Caco-2 (cell line): ENCODE measurements at regions of chr9 and their contacts with region 1.

Region 1: GRCh38 chr9:6305954-6306563 is 22.1 kb upstream of the TPD52L3 start:
- DNase-seq: peak in 1 of 2 experiments; percentile 10
- H3K4me3 ChIP-seq: no peak overlapping the region
- H3K4me3 Mint-ChIP-seq: no peak overlapping the region
- H3K27ac Mint-ChIP-seq: no peak overlapping the region
- H3K4me1 ChIP-seq: no peaks in the 10 kb centered on the region
- H3K4me1 Mint-ChIP-seq: no peaks in the 10 kb centered on the region
- H3K27me3 ChIP-seq: no peaks in the 10 kb centered on the region
- H3K27me3 Mint-ChIP-seq: peaks cover 3% of the 10 kb centered on the region
- CTCF ChIP-seq: peak; percentile 36 to 43

Region 2: GRCh38 chr9:5886114-5886939 is 419.7 kb before region 1 on chr9:
- CTCF ChIA-PET with region 1: interaction called, 4 read pairs
- POLR2A ChIA-PET with region 1: no interaction called
- intact Hi-C with region 1: loop called (anchors 10 kb)
- DNase-seq: peak; percentile 76 to 83
- H3K4me3 ChIP-seq: no peak overlapping the region
- H3K4me3 Mint-ChIP-seq: no peak overlapping the region
- H3K27ac Mint-ChIP-seq: no peak overlapping the region
- H3K4me1 ChIP-seq: no peaks in the 10 kb centered on the region
- H3K4me1 Mint-ChIP-seq: no peaks in the 10 kb centered on the region
- H3K27me3 ChIP-seq: no peaks in the 10 kb centered on the region
- H3K27me3 Mint-ChIP-seq: no peaks in the 10 kb centered on the region
- CTCF ChIP-seq: peak; percentile 83 to 85

Region 3: DNA sequence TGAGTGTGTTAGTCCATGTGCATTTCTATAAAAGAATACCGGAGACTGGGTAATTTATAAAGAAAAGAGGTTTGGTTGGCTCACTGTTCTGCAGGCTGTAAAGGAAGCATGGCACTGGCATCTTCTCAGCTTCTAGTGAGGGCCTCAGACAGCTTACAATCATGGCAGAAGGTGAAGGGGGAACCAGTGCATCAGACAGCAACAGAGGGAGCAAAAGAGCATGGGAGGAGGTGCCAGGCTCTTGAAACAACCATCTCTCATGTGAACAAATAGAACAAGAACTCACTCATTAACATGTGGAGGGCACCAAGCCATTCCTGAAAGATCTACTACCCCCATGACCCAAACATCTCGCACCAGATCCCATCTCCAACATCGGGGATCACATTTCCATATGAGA is 179.7 kb before region 1 on chr9:
- CTCF ChIA-PET with region 1: interaction called, 3 read pairs
- POLR2A ChIA-PET with region 1: no interaction called
- intact Hi-C with region 1: loop called (anchors 2 kb)
- DNase-seq: no peak
- H3K4me3 ChIP-seq: no peak overlapping the region
- H3K4me3 Mint-ChIP-seq: no peak overlapping the region
- H3K27ac Mint-ChIP-seq: no peak overlapping the region
- H3K4me1 ChIP-seq: no peaks in the 10 kb centered on the region
- H3K4me1 Mint-ChIP-seq: no peaks in the 10 kb centered on the region
- H3K27me3 ChIP-seq: no peaks in the 10 kb centered on the region
- H3K27me3 Mint-ChIP-seq: peaks cover 10% of the 10 kb centered on the region
- CTCF ChIP-seq: no peak

Region 4: DNA sequence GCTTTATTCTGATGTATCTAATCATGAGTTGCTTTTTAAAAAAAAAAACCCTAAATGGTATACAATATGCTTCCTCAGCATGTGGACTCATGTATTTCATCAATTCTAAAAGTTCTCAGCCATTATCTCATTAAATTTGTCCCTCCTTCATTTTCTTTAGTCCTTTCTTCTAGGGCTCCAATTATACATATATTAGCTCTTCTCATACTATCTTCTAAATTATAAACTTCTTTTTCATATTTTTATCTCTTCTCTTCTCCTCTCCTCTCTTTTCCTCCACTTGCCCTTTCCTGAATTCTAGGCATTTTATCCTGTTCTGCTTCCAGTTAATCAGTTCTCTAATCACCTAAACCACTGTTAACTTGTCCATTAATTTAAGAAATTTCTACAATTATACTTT is 145.5 kb before region 1 on chr9:
- CTCF ChIA-PET with region 1: no interaction called
- POLR2A ChIA-PET with region 1: no interaction called
- intact Hi-C with region 1: no loop called
- DNase-seq: no peak
- H3K4me3 ChIP-seq: no peak overlapping the region
- H3K4me3 Mint-ChIP-seq: no peak overlapping the region
- H3K27ac Mint-ChIP-seq: no peak overlapping the region
- H3K4me1 ChIP-seq: no peaks in the 10 kb centered on the region
- H3K4me1 Mint-ChIP-seq: no peaks in the 10 kb centered on the region
- H3K27me3 ChIP-seq: no peaks in the 10 kb centered on the region
- H3K27me3 Mint-ChIP-seq: peaks cover 4% of the 10 kb centered on the region
- CTCF ChIP-seq: no peak

Region 5: GRCh38 chr9:6197330-6197729 is 108.7 kb before region 1 on chr9:
- CTCF ChIA-PET with region 1: interaction called, 16 read pairs
- POLR2A ChIA-PET with region 1: no interaction called
- intact Hi-C with region 1: loop called (anchors 1 kb)
- DNase-seq: peak in 1 of 2 experiments; percentile 12
- H3K4me3 ChIP-seq: no peak overlapping the region
- H3K4me3 Mint-ChIP-seq: no peak overlapping the region
- H3K27ac Mint-ChIP-seq: no peak overlapping the region
- H3K4me1 ChIP-seq: no peaks in the 10 kb centered on the region
- H3K4me1 Mint-ChIP-seq: no peaks in the 10 kb centered on the region
- H3K27me3 ChIP-seq: no peaks in the 10 kb centered on the region
- H3K27me3 Mint-ChIP-seq: peaks cover 4% of the 10 kb centered on the region
- CTCF ChIP-seq: peak in 1 of 2 experiments; percentile 18